ENCODE measurements at regions of chr22 and their contacts with region 1.

Region 1: GRCh38 chr22:19495562-19496323 is 16.0 kb downstream of the CDC45 start:
- DNase-seq: peak; percentile 32
- ATAC-seq: no peak
- H3K4me3 ChIP-seq: no peak overlapping the region
- H3K27ac ChIP-seq: no peak overlapping the region
- H3K4me1 ChIP-seq: no peaks in the 10 kb centered on the region
- H3K27me3 ChIP-seq: no peaks in the 10 kb centered on the region
- CTCF ChIP-seq: 0 out of 2 replicates have a peak, but pooled peaks have one; percentile 12
- EP300 ChIP-seq: no peak
- POLR2A ChIP-seq: no peak
- RAD21 ChIP-seq: no peak

Region 2: GRCh38 chr22:19523240-19524169 is 27.8 kb after region 1 on chr22:
- CTCF ChIA-PET with region 1: no interaction called
- POLR2A ChIA-PET with region 1: no interaction called
- in situ Hi-C with region 1: no loop called
- intact Hi-C with region 1: no loop called
- DNase-seq: no peak
- ATAC-seq: no peak
- H3K4me3 ChIP-seq: no peak overlapping the region
- H3K27ac ChIP-seq: no peak overlapping the region
- H3K4me1 ChIP-seq: no peaks in the 10 kb centered on the region
- H3K27me3 ChIP-seq: peaks cover 0 to 13% of the 10 kb centered on the region in 2 experiments; a peak in 1 of 5 replicates
- CTCF ChIP-seq: no peak
- EP300 ChIP-seq: no peak
- POLR2A ChIP-seq: no peak
- RAD21 ChIP-seq: no peak

Region 3: GRCh38 chr22:19629720-19630419 is 134.1 kb after region 1 on chr22:
- CTCF ChIA-PET with region 1: interaction called, 12 read pairs
- POLR2A ChIA-PET with region 1: no interaction called
- in situ Hi-C with region 1: no loop called
- intact Hi-C with region 1: loop called (anchors 1 kb)
- DNase-seq: peak; percentile 65
- ATAC-seq: peak; percentile 86
- H3K4me3 ChIP-seq: no peak overlapping the region
- H3K27ac ChIP-seq: no peak overlapping the region
- H3K4me1 ChIP-seq: peaks cover 12% of the 10 kb centered on the region; the same call in 1 of the 2 replicates
- H3K27me3 ChIP-seq: peaks cover 5 to 29% of the 10 kb centered on the region in 2 experiments; a peak in 4 of 5 replicates
- CTCF ChIP-seq: peak; percentile 97
- EP300 ChIP-seq: no peak
- POLR2A ChIP-seq: no peak
- RAD21 ChIP-seq: peak; percentile 91